K562 (cell line): ENCODE measurements at regions of chr19 and their contacts with region 1.

Region 1: DNA sequence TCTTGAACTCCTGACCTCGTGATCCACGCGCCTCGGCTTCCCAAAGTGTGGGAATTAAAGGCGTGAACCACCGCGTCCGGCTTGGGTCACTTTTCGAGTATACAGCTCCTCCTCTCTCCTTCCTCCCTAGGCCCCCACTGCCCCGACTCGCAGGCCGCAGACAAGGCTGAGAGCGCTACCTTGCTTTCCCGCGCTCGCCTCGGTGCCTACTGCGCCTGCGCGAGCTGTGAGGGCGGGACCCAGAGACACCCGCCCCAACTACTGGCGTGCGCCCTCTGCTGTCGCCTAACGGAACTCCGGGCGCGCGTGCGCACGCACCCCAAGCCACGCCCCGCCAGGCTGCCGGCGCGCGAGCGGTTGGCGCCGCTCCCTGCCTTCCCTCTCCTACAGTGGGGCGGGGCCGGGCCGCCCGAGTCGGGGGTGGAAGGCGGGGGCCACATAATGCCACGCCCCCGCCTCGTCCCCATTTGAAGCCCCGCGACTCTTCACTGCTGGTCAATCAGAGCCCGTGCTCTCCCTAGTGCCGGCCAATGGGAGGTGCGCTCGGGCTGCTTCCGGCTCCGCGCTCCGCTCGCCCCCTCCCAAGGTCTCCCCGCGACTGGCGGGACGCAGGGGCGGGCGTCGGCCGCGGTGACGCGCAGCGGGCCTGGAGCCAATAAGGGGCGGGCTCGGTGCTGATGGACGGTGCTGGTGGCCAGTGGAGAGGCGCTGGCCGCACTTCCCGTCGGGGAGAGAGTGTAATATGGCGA is at the start of gene RAB8A:
- DNase-seq: peak; percentile 97 to 99 (median 98)
- ATAC-seq: peak; percentile 97
- H3K4me3 ChIP-seq: peak within 1 kb of the TSS; percentile 100
- H3K27ac ChIP-seq: peak within 1 kb of the TSS; percentile 98
- H3K4me1 ChIP-seq: peaks cover 20 to 22% of the 10 kb centered on the region in 2 experiments
- H3K27me3 ChIP-seq: no peaks in the 10 kb centered on the region
- CTCF ChIP-seq: peak; percentile 91 to 97 (median 92)
- EP300 ChIP-seq: no peak
- POLR2A ChIP-seq: peak; percentile 75
- RAD21 ChIP-seq: peak; percentile 70 to 74
- polyA plus RNA-seq, gene RAB8A: 11.2 to 13.9 TPM

Region 2: DNA sequence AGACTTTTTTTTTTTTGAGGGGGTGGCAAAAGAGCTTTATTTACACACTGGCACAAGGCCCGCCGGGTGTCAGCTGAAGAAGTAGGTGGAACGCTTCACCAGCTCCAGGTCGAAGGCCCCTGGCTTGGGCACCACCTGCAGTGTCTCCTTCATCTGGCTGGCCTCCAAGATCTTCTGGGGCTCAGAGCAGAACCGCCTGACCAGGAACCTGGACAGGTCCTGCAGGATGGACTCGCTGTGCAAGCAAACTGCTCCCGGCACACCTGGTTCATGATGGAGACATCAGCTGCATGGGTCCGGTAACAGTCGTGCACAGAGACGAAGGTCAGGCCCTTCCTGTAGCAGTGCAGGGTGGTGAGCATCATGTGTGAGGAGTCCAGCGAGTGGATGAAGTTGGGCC is 209.1 kb before region 1 on chr19:
- CTCF ChIA-PET with region 1: no interaction called
- POLR2A ChIA-PET with region 1: no interaction called
- in situ Hi-C with region 1: no loop called
- intact Hi-C with region 1: no loop called
- DNase-seq: no peak
- ATAC-seq: no peak
- H3K4me3 ChIP-seq: no peak overlapping the region
- H3K27ac ChIP-seq: no peak overlapping the region
- H3K4me1 ChIP-seq: peaks cover 0 to 20% of the 10 kb centered on the region in 2 experiments; a peak in 2 of 5 replicates
- H3K27me3 ChIP-seq: peaks cover 4 to 6% of the 10 kb centered on the region in 2 experiments; a peak in 3 of 5 replicates
- CTCF ChIP-seq: no peak
- EP300 ChIP-seq: no peak
- POLR2A ChIP-seq: no peak
- RAD21 ChIP-seq: no peak

Region 3: GRCh38 chr19:16018801-16019551 is 92.4 kb before region 1 on chr19:
- CTCF ChIA-PET with region 1: no interaction called
- POLR2A ChIA-PET with region 1: no interaction called
- in situ Hi-C with region 1: no loop called
- intact Hi-C with region 1: no loop called
- DNase-seq: no peak
- ATAC-seq: no peak
- H3K4me3 ChIP-seq: no peak overlapping the region
- H3K27ac ChIP-seq: no peak overlapping the region
- H3K4me1 ChIP-seq: peaks cover 0 to 9% of the 10 kb centered on the region in 2 experiments; a peak in 1 of 5 replicates
- H3K27me3 ChIP-seq: peaks cover 0 to 16% of the 10 kb centered on the region in 2 experiments; a peak in 2 of 5 replicates
- CTCF ChIP-seq: no peak
- EP300 ChIP-seq: no peak
- POLR2A ChIP-seq: no peak
- RAD21 ChIP-seq: no peak

Region 4: DNA sequence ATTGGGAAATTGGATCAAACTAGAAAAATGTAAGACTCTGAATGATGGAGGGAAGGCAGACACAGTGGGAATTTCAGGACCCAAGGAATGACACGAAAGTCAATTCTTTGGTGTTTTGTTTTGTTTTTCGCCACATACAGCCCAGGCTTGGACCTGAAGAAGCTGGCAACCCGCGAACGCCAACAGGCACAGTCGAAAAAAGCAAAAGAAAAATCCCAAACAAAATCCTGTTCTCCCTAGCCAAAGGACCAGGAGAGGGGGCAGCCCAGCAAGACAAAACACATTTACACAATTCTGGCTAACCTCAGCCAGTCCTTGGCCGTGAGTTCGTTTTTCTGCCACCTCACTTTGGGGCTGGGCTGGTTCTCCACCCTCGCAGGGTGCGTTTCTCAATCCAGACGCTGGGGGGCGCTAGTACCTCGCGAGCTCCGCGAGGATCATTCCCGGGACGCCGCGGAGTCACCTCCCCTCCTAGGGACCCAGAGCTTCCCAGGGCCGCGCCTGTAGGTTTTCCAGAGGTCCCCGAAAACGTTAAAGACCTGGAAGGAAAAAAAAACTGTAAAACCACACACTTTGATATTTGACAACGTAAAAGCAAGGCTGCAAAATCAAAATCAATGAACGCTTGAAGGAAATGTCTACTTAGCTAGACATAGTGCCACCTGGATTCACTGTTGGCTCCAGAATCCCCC is 69.9 kb before region 1 on chr19:
- CTCF ChIA-PET with region 1: interaction called, 3 read pairs
- POLR2A ChIA-PET with region 1: no interaction called
- in situ Hi-C with region 1: no loop called
- intact Hi-C with region 1: loop called (anchors 1 kb)
- DNase-seq: peak; percentile 77 to 94 (median 90)
- ATAC-seq: peak; percentile 93
- H3K4me3 ChIP-seq: no peak overlapping the region
- H3K27ac ChIP-seq: no peak overlapping the region
- H3K4me1 ChIP-seq: peaks cover 0 to 9% of the 10 kb centered on the region in 2 experiments; a peak in 3 of 5 replicates
- H3K27me3 ChIP-seq: peaks cover 1 to 29% of the 10 kb centered on the region in 2 experiments; a peak in 3 of 5 replicates
- CTCF ChIP-seq: peak; percentile 90 to 95 (median 93)
- EP300 ChIP-seq: no peak
- POLR2A ChIP-seq: no peak
- RAD21 ChIP-seq: peak; percentile 88 to 94

Region 5: DNA sequence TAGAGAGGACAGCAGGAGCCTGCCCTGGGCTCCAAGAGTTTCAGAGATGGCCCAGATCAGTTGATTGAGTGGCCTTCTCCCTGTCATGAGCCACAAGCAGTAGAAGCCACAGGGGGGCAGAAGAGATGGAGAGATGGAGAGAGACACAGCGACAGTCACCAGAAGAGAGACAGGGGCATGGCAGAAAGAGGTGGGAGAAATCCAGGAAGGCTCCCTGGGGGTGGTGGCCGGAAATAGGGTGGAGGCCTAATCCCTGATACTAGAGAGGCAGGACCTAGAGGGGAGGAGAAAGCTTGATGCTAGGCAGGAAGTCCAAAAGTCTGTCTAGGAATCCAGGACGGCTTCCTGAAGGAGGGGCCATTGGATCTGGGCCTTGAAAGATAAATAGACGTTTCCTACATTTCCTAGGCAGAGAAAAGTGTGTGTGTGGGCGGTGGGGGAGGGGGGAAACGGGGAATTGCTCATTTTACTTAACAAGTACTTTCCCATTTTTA is 44.7 kb before region 1 on chr19:
- CTCF ChIA-PET with region 1: interaction called, 3 read pairs
- POLR2A ChIA-PET with region 1: interaction called, 3 read pairs
- in situ Hi-C with region 1: no loop called
- intact Hi-C with region 1: loop called (anchors 1 kb)
- DNase-seq: peak; percentile 63 to 76 (median 68)
- ATAC-seq: peak; percentile 82
- H3K4me3 ChIP-seq: no peak overlapping the region
- H3K27ac ChIP-seq: no peak overlapping the region; the same call in 2 of the 3 replicates
- H3K4me1 ChIP-seq: peaks cover 33 to 35% of the 10 kb centered on the region in 2 experiments
- H3K27me3 ChIP-seq: no peaks in the 10 kb centered on the region
- CTCF ChIP-seq: peak; percentile 57 to 69 (median 66)
- EP300 ChIP-seq: peak; percentile 11; the same call in 1 of the 2 replicates
- POLR2A ChIP-seq: no peak
- RAD21 ChIP-seq: peak; percentile 26 to 73

Region 6: DNA sequence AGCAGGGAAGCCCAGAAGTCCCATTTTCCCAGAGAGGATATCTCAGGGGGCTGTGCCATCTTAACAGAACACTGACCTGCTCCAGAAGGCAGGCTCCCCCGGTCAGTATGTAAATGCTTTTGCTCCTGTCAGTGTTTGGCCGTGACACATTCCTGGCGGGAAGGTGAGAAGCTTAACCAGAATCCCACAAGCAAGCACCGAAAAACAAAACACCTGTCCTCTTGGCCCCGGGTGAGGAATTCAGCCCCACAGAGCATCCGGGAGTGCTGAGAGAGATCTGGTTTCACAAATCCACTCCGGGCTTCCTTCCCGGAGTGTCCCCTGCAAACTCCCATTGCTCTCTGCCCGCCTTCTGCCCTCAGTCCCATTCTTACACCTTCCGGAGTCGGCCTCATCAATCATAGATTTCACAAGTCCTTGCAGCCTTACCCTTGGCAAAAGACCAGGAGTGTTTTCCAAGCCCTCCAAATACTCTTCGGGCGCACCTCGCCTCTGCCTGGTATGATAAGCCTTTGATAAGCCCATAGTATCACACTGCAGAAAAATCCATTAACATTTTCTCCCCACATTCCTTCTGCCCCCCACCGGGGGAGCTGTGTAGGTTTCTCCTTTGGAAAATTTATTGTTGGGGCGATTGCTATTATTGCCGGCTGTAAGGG is 22.9 kb before region 1 on chr19:
- CTCF ChIA-PET with region 1: no interaction called
- POLR2A ChIA-PET with region 1: interaction called, 16 read pairs
- in situ Hi-C with region 1: no loop called
- intact Hi-C with region 1: no loop called
- DNase-seq: peak in 2 of 4 experiments; percentile 33 to 34
- ATAC-seq: no peak
- H3K4me3 ChIP-seq: no peak overlapping the region
- H3K27ac ChIP-seq: no peak overlapping the region; the same call in 2 of the 3 replicates
- H3K4me1 ChIP-seq: peaks cover 5 to 14% of the 10 kb centered on the region in 2 experiments
- H3K27me3 ChIP-seq: no peaks in the 10 kb centered on the region
- CTCF ChIP-seq: no peak
- EP300 ChIP-seq: no peak
- POLR2A ChIP-seq: no peak
- RAD21 ChIP-seq: no peak

Region 7: GRCh38 chr19:16153582-16154336 is 42.4 kb after region 1 on chr19:
- CTCF ChIA-PET with region 1: no interaction called
- POLR2A ChIA-PET with region 1: interaction called, 3 read pairs
- in situ Hi-C with region 1: no loop called
- intact Hi-C with region 1: loop called (anchors 5 kb)
- DNase-seq: peak; percentile 61 to 87 (median 72)
- ATAC-seq: peak; percentile 87
- H3K4me3 ChIP-seq: no peak overlapping the region
- H3K27ac ChIP-seq: no peak overlapping the region; the same call in 2 of the 3 replicates
- H3K4me1 ChIP-seq: peaks cover 13 to 15% of the 10 kb centered on the region in 2 experiments; a peak in 4 of 5 replicates
- H3K27me3 ChIP-seq: peaks cover 0 to 4% of the 10 kb centered on the region in 2 experiments; a peak in 1 of 5 replicates
- CTCF ChIP-seq: no peak
- EP300 ChIP-seq: no peak
- POLR2A ChIP-seq: no peak
- RAD21 ChIP-seq: no peak

Region 8: DNA sequence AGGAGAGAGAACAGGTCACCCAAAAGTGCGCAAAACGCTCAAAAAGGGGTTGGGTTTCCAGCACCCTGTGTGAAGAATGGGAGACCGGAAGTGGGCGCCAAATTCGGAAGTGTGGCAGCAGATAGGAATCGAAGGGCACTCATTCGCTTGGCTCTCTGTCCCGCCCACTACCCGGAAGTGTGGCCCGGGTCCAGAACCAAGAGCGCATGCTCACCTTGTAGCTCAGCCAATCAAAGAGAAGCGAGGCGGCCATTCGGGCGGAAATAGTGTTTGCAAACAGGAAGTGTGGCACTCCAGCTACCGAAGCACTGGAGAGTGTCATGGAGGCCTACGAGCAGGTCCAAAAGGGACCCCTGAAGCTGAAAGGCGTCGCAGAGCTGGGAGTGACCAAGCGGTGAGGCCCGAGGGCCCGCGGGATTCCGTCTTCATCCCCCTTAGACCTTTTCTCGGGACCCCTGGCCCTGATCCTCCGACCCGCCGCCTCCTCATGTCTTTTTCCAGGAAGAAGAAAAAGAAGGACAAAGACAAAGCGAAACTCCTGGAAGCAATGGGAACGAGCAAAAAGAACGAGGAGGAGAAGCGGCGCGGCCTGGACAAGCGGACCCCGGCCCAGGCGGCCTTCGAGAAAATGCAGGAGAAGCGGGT is 73.9 kb after region 1 on chr19 and contains the start of gene FAM32A:
- CTCF ChIA-PET with region 1: no interaction called
- POLR2A ChIA-PET with region 1: interaction called, 7 read pairs
- in situ Hi-C with region 1: no loop called
- intact Hi-C with region 1: loop called (anchors 1 kb)
- DNase-seq: peak; percentile 99 to 100 (median 99)
- ATAC-seq: peak; percentile 98
- H3K4me3 ChIP-seq: peak within 1 kb of the TSS; percentile 92
- H3K27ac ChIP-seq: peak within 1 kb of the TSS; percentile 75
- H3K4me1 ChIP-seq: peaks cover 0 to 16% of the 10 kb centered on the region in 2 experiments; a peak in 3 of 5 replicates
- H3K27me3 ChIP-seq: no peaks in the 10 kb centered on the region; a peak in 1 of 5 replicates
- CTCF ChIP-seq: no peak; a peak in 1 of 6 replicates
- EP300 ChIP-seq: no peak
- POLR2A ChIP-seq: peak; percentile 86
- RAD21 ChIP-seq: no peak
- polyA plus RNA-seq, gene FAM32A: 30.7 to 43.0 TPM

Region 9: DNA sequence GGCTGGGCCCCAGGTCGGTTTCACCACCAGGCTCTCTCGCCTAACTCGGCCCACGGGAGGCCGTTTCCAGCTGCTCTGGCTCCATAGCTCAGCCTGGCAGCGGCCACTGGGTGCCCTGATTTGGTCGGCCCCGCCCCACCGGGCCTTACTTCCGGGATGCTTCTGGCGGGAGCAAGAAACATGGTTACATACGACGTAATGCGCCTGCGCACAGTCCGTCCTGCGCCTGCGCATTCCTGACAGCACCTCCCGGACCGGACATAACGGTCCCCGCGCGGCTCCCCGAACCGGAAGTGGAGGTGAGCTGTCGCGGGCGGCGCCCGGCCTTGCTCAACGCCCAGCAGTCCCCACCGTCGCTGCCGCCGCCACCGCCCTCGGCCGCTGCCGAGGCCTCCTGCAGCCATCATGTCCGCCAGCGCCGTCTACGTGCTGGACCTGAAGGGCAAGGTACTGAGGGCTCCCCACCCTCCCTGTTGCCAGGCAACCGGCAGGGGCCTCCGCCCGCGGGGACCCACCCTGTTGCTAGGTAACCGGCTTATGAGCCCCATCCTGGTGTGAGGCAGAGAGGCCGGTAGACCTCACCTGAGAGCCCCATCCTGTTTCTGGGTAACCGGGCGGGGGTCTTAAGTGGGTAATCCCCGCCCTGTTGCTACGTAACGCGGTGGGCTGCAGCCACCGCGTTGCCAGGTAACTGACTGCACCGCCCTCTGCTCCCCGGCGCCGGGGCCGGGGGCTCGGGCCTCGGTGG is 86.5 kb after region 1 on chr19 and contains the start of gene AP1M1:
- CTCF ChIA-PET with region 1: no interaction called
- POLR2A ChIA-PET with region 1: no interaction called
- in situ Hi-C with region 1: no loop called
- intact Hi-C with region 1: no loop called
- DNase-seq: peak; percentile 96 to 98 (median 97)
- ATAC-seq: peak; percentile 94
- H3K4me3 ChIP-seq: peak within 1 kb of the TSS; percentile 78
- H3K27ac ChIP-seq: peak within 1 kb of the TSS; percentile 58
- H3K4me1 ChIP-seq: peaks cover 18 to 25% of the 10 kb centered on the region in 2 experiments; a peak in 4 of 5 replicates
- H3K27me3 ChIP-seq: no peaks in the 10 kb centered on the region
- CTCF ChIP-seq: no peak
- EP300 ChIP-seq: no peak
- POLR2A ChIP-seq: no peak; the same call in none of the 2 replicates
- RAD21 ChIP-seq: no peak
- polyA plus RNA-seq, gene AP1M1: 0.87 to 3.0 TPM